ENCODE measurements at regions of chr6 and their contacts with region 1.

Region 1: GRCh38 chr6:158357566-158358216 is 45.4 kb downstream of the TULP4 start:
- DNase-seq: no peak
- H3K4me3 ChIP-seq: no peak overlapping the region
- H3K27ac ChIP-seq: peak overlapping the region; percentile 18
- H3K4me1 ChIP-seq: no peaks in the 10 kb centered on the region
- H3K27me3 ChIP-seq: no peaks in the 10 kb centered on the region
- CTCF ChIP-seq: no peak

Region 2: GRCh38 chr6:157962601-157963302 is 394.9 kb before region 1 on chr6:
- CTCF ChIA-PET with region 1: no interaction called
- POLR2A ChIA-PET with region 1: no interaction called
- intact Hi-C with region 1: no loop called
- DNase-seq: no peak
- H3K4me3 ChIP-seq: no peak overlapping the region
- H3K27ac ChIP-seq: no peak overlapping the region
- H3K4me1 ChIP-seq: no peaks in the 10 kb centered on the region
- H3K27me3 ChIP-seq: no peaks in the 10 kb centered on the region
- CTCF ChIP-seq: no peak

Region 3: DNA sequence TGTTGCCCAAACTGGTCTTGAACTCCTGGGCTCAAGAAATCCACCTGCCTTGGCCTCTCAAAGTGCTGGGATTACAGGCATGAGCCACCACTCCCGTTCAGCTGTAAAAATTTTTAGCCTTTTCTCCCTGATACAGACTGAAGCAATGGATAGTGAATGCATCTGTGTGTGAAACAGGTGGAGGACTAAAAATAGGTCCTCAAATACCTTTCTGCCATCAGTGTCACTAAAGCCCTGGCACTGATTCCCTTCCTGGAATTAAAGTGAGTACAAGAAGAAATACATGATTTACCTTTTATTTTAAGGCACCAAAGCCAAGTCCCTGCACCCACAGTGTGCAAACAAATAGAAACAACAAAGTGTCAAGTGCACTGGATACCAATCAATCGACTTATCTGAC is 20.4 kb before region 1 on chr6:
- CTCF ChIA-PET with region 1: no interaction called
- POLR2A ChIA-PET with region 1: no interaction called
- intact Hi-C with region 1: loop called (anchors 1 kb)
- DNase-seq: no peak
- H3K4me3 ChIP-seq: no peak overlapping the region
- H3K27ac ChIP-seq: no peak overlapping the region
- H3K4me1 ChIP-seq: no peaks in the 10 kb centered on the region
- H3K27me3 ChIP-seq: no peaks in the 10 kb centered on the region
- CTCF ChIP-seq: no peak

Region 4: GRCh38 chr6:159440911-159441703 is 1083.4 kb after region 1 on chr6:
- CTCF ChIA-PET with region 1: no interaction called
- POLR2A ChIA-PET with region 1: no interaction called
- intact Hi-C with region 1: no loop called
- DNase-seq: peak; percentile 62
- H3K4me3 ChIP-seq: no peak overlapping the region
- H3K27ac ChIP-seq: no peak overlapping the region
- H3K4me1 ChIP-seq: no peaks in the 10 kb centered on the region
- H3K27me3 ChIP-seq: no peaks in the 10 kb centered on the region
- CTCF ChIP-seq: no peak